PC-3 (cell line): ENCODE measurements at regions of chr14 and their contacts with region 1.

Region 1: GRCh38 chr14:54446161-54446693 is 5.1 kb upstream of the CNIH1 start:
- DNase-seq: peak; percentile 71
- ATAC-seq: no peak
- H3K4me3 ChIP-seq: no peak overlapping the region
- H3K27ac ChIP-seq: peak overlapping the region; percentile 61; the same call in 1 of the 2 replicates
- H3K4me1 ChIP-seq: peaks cover 27% of the 10 kb centered on the region
- H3K27me3 ChIP-seq: no peaks in the 10 kb centered on the region
- CTCF ChIP-seq: no peak

Region 2: GRCh38 chr14:54480832-54481562 is 34.8 kb after region 1 on chr14:
- CTCF ChIA-PET with region 1: interaction called, 16 read pairs
- POLR2A ChIA-PET with region 1: no interaction called
- intact Hi-C with region 1: loop called (anchors 2 kb)
- DNase-seq: peak; percentile 95
- ATAC-seq: peak; percentile 72
- H3K4me3 ChIP-seq: peak overlapping the region; percentile 36
- H3K27ac ChIP-seq: peak overlapping the region; percentile 70
- H3K4me1 ChIP-seq: peaks cover 53% of the 10 kb centered on the region
- H3K27me3 ChIP-seq: no peaks in the 10 kb centered on the region
- CTCF ChIP-seq: peak; percentile 42; the same call in 1 of the 2 replicates

Region 3: DNA sequence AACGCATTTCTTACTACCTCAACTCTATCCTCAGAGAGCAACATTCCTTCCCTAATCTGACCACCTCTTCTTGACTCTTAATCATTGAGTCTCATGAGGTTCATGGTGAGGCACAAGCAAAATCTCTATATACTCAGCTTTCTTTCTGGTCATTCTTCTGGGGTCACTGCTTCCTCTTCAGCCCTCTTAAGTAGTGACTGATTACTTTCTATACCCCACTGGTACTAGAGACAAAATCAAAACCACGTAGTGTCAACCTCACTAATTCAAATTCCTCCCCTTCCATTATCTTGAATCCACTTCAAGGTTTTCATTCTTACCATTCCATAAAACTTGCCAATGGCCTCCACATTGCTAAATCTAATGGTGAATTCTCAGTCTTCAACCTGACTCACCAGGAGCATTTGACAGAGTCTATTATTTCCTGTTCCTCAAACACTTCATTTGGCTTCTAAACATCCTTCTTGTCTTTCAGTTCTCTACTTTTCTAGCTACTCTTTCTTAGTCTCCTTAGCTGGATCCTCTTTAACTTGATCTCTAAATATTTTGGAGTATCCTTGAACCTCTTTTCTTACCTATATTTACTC is 573.8 kb after region 1 on chr14:
- CTCF ChIA-PET with region 1: no interaction called
- POLR2A ChIA-PET with region 1: no interaction called
- intact Hi-C with region 1: no loop called
- DNase-seq: no peak
- ATAC-seq: no peak
- H3K4me3 ChIP-seq: no peak overlapping the region
- H3K27ac ChIP-seq: no peak overlapping the region
- H3K4me1 ChIP-seq: peaks cover 9% of the 10 kb centered on the region
- H3K27me3 ChIP-seq: no peaks in the 10 kb centered on the region
- CTCF ChIP-seq: no peak